PC-3 (cell line): ENCODE measurements at regions of chr3 and their contacts with region 1.

Region 1: DNA sequence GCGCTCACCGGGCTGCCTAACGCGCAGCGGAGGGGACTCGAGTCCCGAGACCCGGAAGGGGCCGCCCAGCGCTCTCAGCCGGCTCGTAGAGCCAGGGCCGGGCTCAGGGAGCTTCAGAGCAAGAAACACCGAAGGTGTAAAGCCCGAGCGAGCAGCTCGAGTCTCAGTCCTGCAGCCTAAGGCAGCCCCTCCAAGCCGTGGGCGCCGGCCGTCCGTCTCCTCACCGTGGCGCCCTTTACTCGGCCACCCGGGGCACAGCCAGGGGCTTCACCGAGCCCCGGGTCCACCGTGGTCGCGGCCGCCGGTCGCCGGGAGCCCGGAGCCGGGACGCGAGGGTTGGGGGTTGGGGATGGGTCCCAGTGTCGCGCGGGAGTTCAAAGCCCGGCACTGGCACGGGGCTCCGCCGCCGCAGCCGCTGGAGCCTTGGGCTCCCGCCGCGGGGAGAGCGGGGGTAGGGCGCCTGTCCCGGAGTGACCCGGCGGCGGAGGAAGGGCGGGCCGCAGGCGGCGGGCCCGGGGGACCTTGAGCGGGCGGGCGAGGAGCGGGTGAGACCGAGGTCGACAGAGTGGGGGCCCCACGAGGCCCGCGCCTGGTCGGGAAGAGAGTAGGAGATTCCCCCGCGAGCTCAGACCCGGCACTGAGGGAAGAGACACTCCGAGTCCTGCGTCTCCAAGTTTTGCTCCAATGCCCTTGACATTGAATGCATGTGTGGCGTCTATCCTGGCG is 26.9 kb upstream of the THRB start:
- DNase-seq: peak; percentile 35
- ATAC-seq: peak; percentile 55
- H3K4me3 ChIP-seq: peak overlapping the region; percentile 74
- H3K27ac ChIP-seq: peak overlapping the region; percentile 48
- H3K4me1 ChIP-seq: peaks cover 39% of the 10 kb centered on the region
- H3K27me3 ChIP-seq: no peaks in the 10 kb centered on the region
- CTCF ChIP-seq: peak; percentile 37; the same call in 1 of the 2 replicates

Region 2: GRCh38 chr3:23805633-23806533 is 715.7 kb before region 1 on chr3 and contains the start of gene UBE2E1:
- CTCF ChIA-PET with region 1: no interaction called
- POLR2A ChIA-PET with region 1: no interaction called
- intact Hi-C with region 1: no loop called
- DNase-seq: peak; percentile 61
- ATAC-seq: peak; percentile 35
- H3K4me3 ChIP-seq: peak within 1 kb of the TSS; percentile 90
- H3K27ac ChIP-seq: peak within 1 kb of the TSS; percentile 29
- H3K4me1 ChIP-seq: peaks cover 45% of the 10 kb centered on the region
- H3K27me3 ChIP-seq: no peaks in the 10 kb centered on the region
- CTCF ChIP-seq: no peak
- total RNA-seq, gene UBE2E1: 90.1 and 117 TPM in 2 replicates

Region 3: GRCh38 chr3:24550588-24550987 is 29.0 kb after region 1 on chr3:
- CTCF ChIA-PET with region 1: no interaction called
- POLR2A ChIA-PET with region 1: interaction called, 3 read pairs
- intact Hi-C with region 1: loop called (anchors 1 kb)
- DNase-seq: peak; percentile 89
- ATAC-seq: peak; percentile 95
- H3K4me3 ChIP-seq: no peak overlapping the region
- H3K27ac ChIP-seq: no peak overlapping the region
- H3K4me1 ChIP-seq: peaks cover 31% of the 10 kb centered on the region
- H3K27me3 ChIP-seq: no peaks in the 10 kb centered on the region
- CTCF ChIP-seq: no peak

Region 4: GRCh38 chr3:24582431-24583403 is 61.1 kb after region 1 on chr3:
- CTCF ChIA-PET with region 1: no interaction called
- POLR2A ChIA-PET with region 1: no interaction called
- intact Hi-C with region 1: loop called (anchors 2 kb)
- DNase-seq: peak; percentile 60
- ATAC-seq: peak; percentile 78
- H3K4me3 ChIP-seq: no peak overlapping the region
- H3K27ac ChIP-seq: no peak overlapping the region
- H3K4me1 ChIP-seq: no peaks in the 10 kb centered on the region
- H3K27me3 ChIP-seq: no peaks in the 10 kb centered on the region
- CTCF ChIP-seq: peak; percentile 73

Region 5: DNA sequence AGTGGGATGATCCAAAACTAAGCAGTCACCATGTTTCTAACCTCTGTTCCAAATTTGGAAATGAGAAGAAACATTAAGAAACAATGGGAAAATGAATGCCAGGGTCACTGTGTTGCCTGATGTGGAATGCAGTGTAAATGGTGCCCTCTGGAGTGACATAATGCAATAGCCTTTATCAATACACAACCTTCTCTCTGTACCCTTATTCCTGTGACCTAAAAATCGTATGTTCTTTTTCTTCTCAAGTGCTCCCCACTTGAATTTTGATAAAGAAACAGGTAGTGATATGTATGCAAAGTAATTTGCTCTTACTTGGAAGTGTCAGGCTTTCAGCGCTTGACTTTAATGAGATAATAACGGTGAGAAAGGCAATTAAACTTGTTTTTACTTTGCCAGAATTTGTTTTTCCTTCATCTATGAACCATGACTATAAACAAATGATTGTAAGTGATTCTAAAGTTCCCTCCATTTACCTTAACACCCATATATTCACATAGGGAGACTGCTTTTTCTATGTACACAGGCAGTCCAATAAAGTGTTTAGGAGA is 118.8 kb after region 1 on chr3:
- CTCF ChIA-PET with region 1: no interaction called
- POLR2A ChIA-PET with region 1: no interaction called
- intact Hi-C with region 1: loop called (anchors 2 kb)
- DNase-seq: peak; percentile 74
- ATAC-seq: peak; percentile 94
- H3K4me3 ChIP-seq: no peak overlapping the region
- H3K27ac ChIP-seq: no peak overlapping the region
- H3K4me1 ChIP-seq: peaks cover 16% of the 10 kb centered on the region
- H3K27me3 ChIP-seq: no peaks in the 10 kb centered on the region
- CTCF ChIP-seq: peak; percentile 95